T-cell (primary cell): ENCODE measurements at regions of chr4 and their contacts with region 1.

Region 1: DNA sequence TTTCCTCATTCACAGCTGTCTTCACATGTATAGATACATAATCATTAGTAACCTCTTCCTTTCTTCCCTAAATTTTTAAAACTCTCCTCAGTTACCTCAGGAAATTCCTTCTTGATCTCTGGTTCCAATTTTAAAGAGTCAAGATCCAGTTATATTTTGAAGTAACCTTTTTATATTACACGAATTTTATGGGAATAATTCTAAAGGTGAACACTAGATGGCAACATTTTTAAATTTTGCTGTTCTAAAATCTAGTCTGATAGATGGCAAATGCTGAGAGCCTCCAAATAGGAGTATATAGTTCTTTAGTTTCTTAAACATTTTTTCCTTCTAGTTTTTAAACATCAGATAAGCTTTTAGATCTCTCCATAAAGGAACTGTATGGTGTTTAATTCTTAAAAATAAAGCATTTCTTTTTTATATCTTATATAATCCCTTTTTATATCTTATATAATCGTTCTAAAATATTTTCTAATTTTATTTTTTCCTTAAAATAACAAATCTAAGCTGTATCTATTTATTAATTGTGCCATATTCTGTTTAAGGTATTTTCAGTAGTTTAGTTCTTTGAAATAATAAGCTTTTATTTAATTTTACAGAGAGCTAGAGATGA is 37.9 kb upstream of the PAPSS1 start:
- DNase-seq: peak in 1 of 35 experiments; percentile 40
- ATAC-seq: no peak
- H3K4me3 ChIP-seq: no peak overlapping the region
- H3K4me3 Mint-ChIP-seq: no peak overlapping the region
- H3K27ac ChIP-seq: no peak overlapping the region
- H3K27ac Mint-ChIP-seq: no peak overlapping the region
- H3K4me1 ChIP-seq: no peaks in the 10 kb centered on the region
- H3K4me1 Mint-ChIP-seq: peaks cover 0 to 5% (median 0%) of the 10 kb centered on the region in 3 donors
- H3K27me3 ChIP-seq: peaks cover 0 to 3% of the 10 kb centered on the region in 2 experiments
- H3K27me3 Mint-ChIP-seq: peaks cover 3 to 5% of the 10 kb centered on the region in 2 donors

Region 2: DNA sequence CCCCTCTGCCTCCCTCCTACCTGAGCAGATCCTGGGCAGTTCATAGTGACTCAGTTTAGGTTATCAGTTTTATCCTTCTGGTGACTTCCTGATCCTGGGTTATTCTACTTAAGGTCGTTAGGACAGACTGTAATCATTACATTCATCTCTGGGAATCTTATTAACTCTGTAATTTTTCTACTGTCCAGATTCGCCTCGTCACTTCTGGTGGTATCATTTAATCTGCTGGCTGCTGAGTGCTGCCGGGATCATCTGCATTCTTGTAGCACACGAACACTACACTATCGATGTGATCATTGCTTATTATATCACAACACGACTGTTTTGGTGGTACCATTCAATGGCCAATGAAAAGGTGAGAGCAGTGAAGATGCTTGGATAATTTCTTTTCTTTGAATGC is 150.4 kb after region 1 on chr4:
- CTCF ChIA-PET with region 1: interaction called, 10 read pairs
- POLR2A ChIA-PET with region 1: no interaction called
- DNase-seq: no peak
- ATAC-seq: no peak
- H3K4me3 ChIP-seq: no peak overlapping the region
- H3K4me3 Mint-ChIP-seq: no peak overlapping the region
- H3K27ac ChIP-seq: no peak overlapping the region
- H3K27ac Mint-ChIP-seq: no peak overlapping the region
- H3K4me1 ChIP-seq: no peaks in the 10 kb centered on the region
- H3K4me1 Mint-ChIP-seq: peaks cover 0 to 2% (median 0%) of the 10 kb centered on the region in 3 donors
- H3K27me3 ChIP-seq: no peaks in the 10 kb centered on the region
- H3K27me3 Mint-ChIP-seq: peaks cover 3 to 11% of the 10 kb centered on the region in 2 donors

Region 3: GRCh38 chr4:107913281-107913899 is 155.4 kb after region 1 on chr4:
- CTCF ChIA-PET with region 1: interaction called, 10 read pairs
- POLR2A ChIA-PET with region 1: no interaction called
- DNase-seq: peak in 18 of 35 experiments; percentile 1 to 79 (median 12)
- ATAC-seq: peak; percentile 63 to 84 (median 73)
- H3K4me3 ChIP-seq: no peak overlapping the region
- H3K4me3 Mint-ChIP-seq: no peak overlapping the region
- H3K27ac ChIP-seq: no peak overlapping the region
- H3K27ac Mint-ChIP-seq: no peak overlapping the region
- H3K4me1 ChIP-seq: no peaks in the 10 kb centered on the region
- H3K4me1 Mint-ChIP-seq: peaks cover 0 to 2% (median 0%) of the 10 kb centered on the region in 3 donors
- H3K27me3 ChIP-seq: no peaks in the 10 kb centered on the region
- H3K27me3 Mint-ChIP-seq: peaks cover under 1 to 5% of the 10 kb centered on the region in 2 donors